ENCODE measurements at regions of chr16 and their contacts with region 1.

Region 1: DNA sequence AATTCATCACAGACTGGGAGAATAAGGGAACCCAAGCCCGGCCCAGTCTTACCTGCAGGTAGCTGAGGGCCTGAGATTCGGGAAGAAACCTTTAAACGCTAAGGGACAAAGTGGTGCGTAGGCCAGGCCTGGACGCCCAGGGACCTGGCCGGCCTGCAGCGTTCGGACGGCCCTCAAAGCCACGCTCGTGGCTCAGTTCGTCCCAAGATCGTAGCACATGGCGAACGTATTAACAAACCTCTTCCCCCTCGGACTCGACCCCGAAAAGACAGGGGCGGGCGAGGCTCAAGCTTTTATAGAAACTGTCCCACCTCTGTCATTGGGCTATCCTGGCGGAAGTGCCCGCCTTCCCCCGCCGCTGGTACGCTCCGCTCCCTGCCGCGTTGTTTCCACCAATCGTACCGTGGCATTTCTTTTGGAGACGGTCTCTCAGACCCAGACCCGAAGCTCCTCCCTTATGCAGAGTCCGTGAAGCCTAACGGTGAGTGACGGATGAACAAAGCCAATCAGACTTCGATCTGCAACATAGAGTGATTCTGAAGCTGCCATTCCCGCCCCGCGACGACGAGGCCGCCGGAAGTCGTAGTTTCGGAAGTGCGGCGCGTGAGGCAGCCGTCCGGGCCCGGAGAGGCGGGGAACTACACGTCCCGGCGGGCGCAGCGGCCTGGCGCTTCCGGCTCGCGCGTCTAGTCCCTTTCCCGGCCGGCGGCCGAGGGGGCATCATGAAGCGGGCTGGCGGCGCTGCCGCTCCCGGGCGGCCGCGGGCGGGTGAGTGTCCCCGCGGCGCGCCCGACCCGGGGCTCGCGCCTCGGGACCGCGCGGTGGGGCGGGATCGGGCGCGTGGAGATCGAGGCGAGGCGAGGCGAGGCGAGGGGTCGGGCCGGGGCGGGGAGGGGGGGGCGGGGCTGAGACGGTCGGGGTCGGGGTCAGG is at the start of gene TRAF7:
- DNase-seq: peak; percentile 99
- H3K4me3 Mint-ChIP-seq: peak within 1 kb of the TSS; percentile 92
- H3K27ac Mint-ChIP-seq: peak within 1 kb of the TSS; percentile 94
- H3K4me1 Mint-ChIP-seq: peaks cover 28% of the 10 kb centered on the region
- H3K27me3 Mint-ChIP-seq: no peaks in the 10 kb centered on the region
- total RNA-seq, gene TRAF7: 68.7 and 80.3 TPM in 2 replicates

Region 2: GRCh38 chr16:1782352-1783091 is 372.8 kb before region 1 on chr16 and contains the starts of genes NUBP2 and SPSB3:
- intact Hi-C with region 1: loop called (anchors 1 kb)
- DNase-seq: peak; percentile 99
- H3K4me3 Mint-ChIP-seq: peak within 1 kb of the TSS; percentile 93
- H3K27ac Mint-ChIP-seq: peak within 1 kb of the TSS; percentile 85
- H3K4me1 Mint-ChIP-seq: peaks cover 9% of the 10 kb centered on the region
- H3K27me3 Mint-ChIP-seq: peaks cover 2% of the 10 kb centered on the region
- total RNA-seq, gene NUBP2: 77.4 and 81.1 TPM in 2 replicates
- total RNA-seq, gene SPSB3: 24.6 and 24.9 TPM in 2 replicates

Region 3: DNA sequence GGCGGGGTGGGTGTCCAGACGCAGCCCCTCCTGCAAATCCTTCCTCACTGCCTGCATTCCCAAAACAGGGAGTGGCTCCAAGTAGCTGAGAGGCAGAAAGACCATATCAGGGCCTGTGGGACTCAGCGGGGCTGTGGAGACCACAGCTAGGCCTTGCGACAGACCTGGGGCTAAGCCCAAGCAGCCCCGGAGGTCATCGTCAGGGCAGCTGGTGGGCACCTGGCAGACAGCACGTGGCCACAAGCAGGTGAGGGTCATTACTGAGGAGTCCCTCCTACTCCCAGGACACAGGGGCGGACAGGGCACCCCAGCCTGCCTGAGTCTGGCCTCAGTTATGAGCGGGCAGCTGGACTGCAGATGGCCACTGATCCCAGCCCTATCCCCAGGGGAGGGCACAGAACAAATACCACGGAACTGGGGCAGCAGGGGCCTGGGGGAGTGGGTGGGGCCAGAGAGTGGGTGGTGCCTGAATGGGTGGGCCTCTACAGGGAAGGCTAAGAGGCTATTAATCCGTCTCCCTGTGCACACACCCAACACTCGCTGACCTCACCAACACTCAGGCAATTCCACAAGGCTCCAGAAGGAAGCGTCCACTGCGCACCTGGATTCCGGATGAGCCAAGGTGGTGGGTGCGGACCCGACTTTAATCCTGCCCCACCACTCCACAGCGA is 245.7 kb before region 1 on chr16:
- intact Hi-C with region 1: no loop called
- DNase-seq: no peak
- H3K4me3 Mint-ChIP-seq: no peak overlapping the region
- H3K27ac Mint-ChIP-seq: no peak overlapping the region
- H3K4me1 Mint-ChIP-seq: no peaks in the 10 kb centered on the region
- H3K27me3 Mint-ChIP-seq: peaks cover 8% of the 10 kb centered on the region

Region 4: DNA sequence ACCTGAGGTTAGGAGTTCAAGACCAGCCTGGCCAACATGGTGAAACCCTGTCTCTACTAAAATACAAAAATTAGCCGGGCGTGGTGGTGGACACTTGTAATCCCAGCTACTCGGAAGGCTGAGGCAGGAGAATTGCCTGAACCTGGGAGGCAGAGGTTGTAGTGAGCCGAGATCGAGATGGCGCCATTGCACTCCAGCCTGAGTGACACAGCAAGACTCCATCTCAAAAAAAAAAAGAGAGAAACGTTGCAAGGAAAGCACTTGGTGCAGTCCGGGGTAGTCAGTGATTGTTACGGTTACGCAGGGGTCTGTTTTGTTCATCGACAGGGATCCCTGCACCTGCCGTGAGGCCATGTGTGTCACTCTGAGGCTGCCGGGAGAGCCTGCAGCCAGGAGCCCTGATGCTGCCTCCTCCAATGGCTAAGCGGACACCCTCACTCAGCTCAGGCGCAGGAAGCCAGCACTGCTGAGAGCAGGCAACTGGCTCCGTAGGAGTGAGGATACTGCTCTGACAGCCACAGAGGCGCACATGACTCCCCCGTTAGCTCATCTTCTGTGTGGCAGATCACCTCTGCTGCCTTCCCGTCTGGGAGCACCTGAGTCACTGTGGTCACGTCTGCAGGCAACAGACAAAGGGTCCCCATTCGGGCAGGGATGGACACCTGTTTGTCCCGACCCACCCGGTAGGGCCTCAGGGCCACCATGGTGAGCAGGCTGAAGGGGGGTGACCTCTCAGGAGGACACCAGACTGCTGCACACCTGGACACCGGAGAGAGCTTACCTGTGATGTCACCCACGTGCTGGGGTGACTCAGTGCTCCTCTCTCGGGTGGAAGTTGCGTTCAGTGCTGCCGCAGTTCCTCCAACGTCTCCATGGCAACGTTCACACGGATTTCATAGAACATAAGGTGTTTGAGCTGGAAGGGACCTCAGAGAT is 12.1 kb before region 1 on chr16:
- intact Hi-C with region 1: no loop called
- DNase-seq: no peak
- H3K4me3 Mint-ChIP-seq: no peak overlapping the region
- H3K27ac Mint-ChIP-seq: no peak overlapping the region
- H3K4me1 Mint-ChIP-seq: peaks cover 2% of the 10 kb centered on the region
- H3K27me3 Mint-ChIP-seq: peaks cover 6% of the 10 kb centered on the region

Region 5: GRCh38 chr16:2213817-2214720 is 58.7 kb after region 1 on chr16:
- intact Hi-C with region 1: loop called (anchors 2 kb)
- DNase-seq: no peak
- H3K4me3 Mint-ChIP-seq: peak overlapping the region; percentile 86
- H3K27ac Mint-ChIP-seq: peak overlapping the region; percentile 58
- H3K4me1 Mint-ChIP-seq: peaks cover 17% of the 10 kb centered on the region
- H3K27me3 Mint-ChIP-seq: no peaks in the 10 kb centered on the region

Region 6: GRCh38 chr16:2251483-2252240 is 96.3 kb after region 1 on chr16 and contains the start of gene ECI1:
- intact Hi-C with region 1: loop called (anchors 5 kb)
- DNase-seq: peak; percentile 95
- H3K4me3 Mint-ChIP-seq: peak within 1 kb of the TSS; percentile 93
- H3K27ac Mint-ChIP-seq: peak within 1 kb of the TSS; percentile 90
- H3K4me1 Mint-ChIP-seq: peaks cover 6% of the 10 kb centered on the region
- H3K27me3 Mint-ChIP-seq: no peaks in the 10 kb centered on the region
- total RNA-seq, gene ECI1: 34.1 and 38.7 TPM in 2 replicates

Region 7: GRCh38 chr16:2404099-2404498 is 248.7 kb after region 1 on chr16:
- intact Hi-C with region 1: no loop called
- DNase-seq: no peak
- H3K4me3 Mint-ChIP-seq: no peak overlapping the region
- H3K27ac Mint-ChIP-seq: no peak overlapping the region
- H3K4me1 Mint-ChIP-seq: no peaks in the 10 kb centered on the region
- H3K27me3 Mint-ChIP-seq: peaks cover 3% of the 10 kb centered on the region

Region 8: GRCh38 chr16:2513405-2514322 is 358.3 kb after region 1 on chr16 and contains the start of gene ATP6V0C:
- intact Hi-C with region 1: loop called (anchors 5 kb)
- DNase-seq: peak; percentile 98
- H3K4me3 Mint-ChIP-seq: peak within 1 kb of the TSS; percentile 94
- H3K27ac Mint-ChIP-seq: peak within 1 kb of the TSS; percentile 97
- H3K4me1 Mint-ChIP-seq: peaks cover 38% of the 10 kb centered on the region
- H3K27me3 Mint-ChIP-seq: peaks cover 6% of the 10 kb centered on the region
- total RNA-seq, gene ATP6V0C: 105 and 122 TPM in 2 replicates

Measured in activated CD4-positive, alpha-beta T cell treated with anti-CD3 and anti-CD28 coated beads, Interleukin-2, amount 10 ng/mL, durations not matched to agents 24 days and 14 days (primary cell).